ENCODE measurements at regions of chr11 and their contacts with region 1.

Region 1: DNA sequence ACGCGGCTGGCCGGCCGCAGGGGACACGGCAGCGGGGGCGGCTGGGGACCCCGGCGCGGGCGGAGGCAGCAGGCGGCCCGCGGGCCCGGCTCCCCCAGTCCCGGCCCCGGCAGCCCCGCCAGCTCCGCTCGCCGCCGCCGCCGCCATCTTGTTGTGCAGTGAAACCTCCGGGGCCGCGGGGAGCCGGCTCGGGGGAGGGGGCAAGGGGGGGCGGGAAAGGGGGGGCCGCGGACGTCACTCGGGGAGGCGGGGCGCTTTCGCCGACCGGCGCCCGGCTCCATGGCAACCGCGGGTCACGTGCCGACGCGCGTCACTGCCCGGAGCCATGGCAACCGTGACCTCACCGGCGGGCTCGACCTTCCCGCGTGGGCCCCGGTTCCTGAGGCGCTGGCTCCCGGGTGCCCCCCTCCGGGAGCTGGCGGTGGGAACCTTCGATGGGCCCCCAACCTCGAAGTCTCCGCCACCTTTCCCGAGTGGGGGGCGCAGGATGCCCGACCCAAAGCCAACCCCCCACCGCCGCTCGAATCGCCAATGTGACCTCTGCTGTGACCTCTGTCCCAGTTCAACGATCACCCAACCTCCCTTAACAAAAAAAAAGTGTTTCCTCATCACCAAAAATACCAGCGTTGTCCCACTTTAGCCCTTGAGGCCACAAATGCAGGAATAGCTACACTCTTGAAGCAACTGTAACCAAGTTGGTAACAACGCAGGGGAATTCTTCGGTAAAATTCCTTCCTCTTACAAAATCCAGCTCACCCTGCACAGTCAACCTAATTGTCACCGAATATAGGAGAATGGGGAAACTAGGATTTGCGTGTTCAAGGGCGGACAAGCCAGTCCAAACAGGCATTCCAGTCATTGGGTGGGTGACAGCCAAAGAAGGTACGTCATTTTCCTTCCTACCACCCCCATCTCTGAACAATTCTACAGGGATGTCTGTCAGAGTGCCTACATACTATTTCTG is at the start of gene SIK3:
- DNase-seq: peak; percentile 89
- H3K4me3 Mint-ChIP-seq: peak within 1 kb of the TSS; percentile 85
- H3K27ac Mint-ChIP-seq: peak within 1 kb of the TSS; percentile 100
- H3K4me1 Mint-ChIP-seq: peaks cover 44% of the 10 kb centered on the region
- H3K27me3 Mint-ChIP-seq: no peaks in the 10 kb centered on the region
- CTCF ChIP-seq: peak; percentile 44
- total RNA-seq, gene SIK3: 33.3 and 36.5 TPM in 2 replicates

Region 2: DNA sequence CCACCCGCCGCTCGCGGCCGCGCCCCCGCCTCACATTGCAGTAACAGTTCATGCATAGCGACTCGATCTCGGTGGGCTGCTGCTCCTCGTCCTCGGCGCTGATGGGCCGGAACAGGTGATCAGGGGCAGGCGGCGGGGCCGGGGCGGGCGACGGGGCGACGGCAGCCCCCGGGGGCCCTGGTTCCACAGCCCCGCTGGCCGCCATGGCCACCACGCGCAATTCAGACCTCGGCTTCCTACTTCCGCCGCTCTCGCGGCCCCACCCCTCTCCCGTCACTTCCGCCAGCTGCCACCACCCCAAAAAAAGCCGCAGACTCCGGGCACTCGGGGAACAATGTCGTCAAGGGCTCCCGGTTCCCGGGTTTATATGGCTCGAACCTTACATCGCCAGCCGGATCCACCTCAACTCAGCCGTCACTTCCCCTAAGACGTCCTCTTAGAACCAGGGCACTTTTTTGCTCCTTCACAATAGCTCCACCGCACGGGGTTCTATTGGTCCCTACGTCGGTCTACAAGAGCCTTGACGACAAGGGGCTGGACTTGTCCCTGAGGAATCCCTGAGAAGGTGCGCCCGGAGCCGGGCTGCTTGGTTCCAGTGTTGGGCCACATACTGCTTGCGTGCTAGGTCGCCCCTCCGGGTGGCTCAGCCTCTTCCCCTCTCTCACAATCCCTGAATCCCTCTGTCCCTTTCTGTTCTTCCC is 310.6 kb before region 1 on chr11 and contains the start of gene ZPR1:
- CTCF ChIA-PET with region 1: no interaction called
- POLR2A ChIA-PET with region 1: interaction called, 16 read pairs
- intact Hi-C with region 1: no loop called
- DNase-seq: peak; percentile 58
- H3K4me3 Mint-ChIP-seq: peak within 1 kb of the TSS; percentile 92
- H3K27ac Mint-ChIP-seq: peak within 1 kb of the TSS; percentile 99
- H3K4me1 Mint-ChIP-seq: peaks cover 28% of the 10 kb centered on the region
- H3K27me3 Mint-ChIP-seq: no peaks in the 10 kb centered on the region
- CTCF ChIP-seq: no peak
- total RNA-seq, gene ZPR1: 82.5 and 105 TPM in 2 replicates

Region 3: GRCh38 chr11:116960930-116961329 is 137.6 kb before region 1 on chr11:
- CTCF ChIA-PET with region 1: interaction called, 3 read pairs
- POLR2A ChIA-PET with region 1: interaction called, 18 read pairs
- intact Hi-C with region 1: no loop called
- DNase-seq: peak; percentile 63
- H3K4me3 Mint-ChIP-seq: no peak overlapping the region
- H3K27ac Mint-ChIP-seq: peak overlapping the region; percentile 44
- H3K4me1 Mint-ChIP-seq: peaks cover 20% of the 10 kb centered on the region
- H3K27me3 Mint-ChIP-seq: no peaks in the 10 kb centered on the region
- CTCF ChIP-seq: no peak

Region 4: GRCh38 chr11:117010808-117011540 is 87.6 kb before region 1 on chr11:
- CTCF ChIA-PET with region 1: interaction called, 5 read pairs
- POLR2A ChIA-PET with region 1: interaction called, 14 read pairs
- intact Hi-C with region 1: loop called (anchors 5 kb)
- DNase-seq: peak; percentile 90
- H3K4me3 Mint-ChIP-seq: peak overlapping the region; percentile 50
- H3K27ac Mint-ChIP-seq: peak overlapping the region; percentile 62
- H3K4me1 Mint-ChIP-seq: peaks cover 24% of the 10 kb centered on the region
- H3K27me3 Mint-ChIP-seq: no peaks in the 10 kb centered on the region
- CTCF ChIP-seq: no peak

Region 5: DNA sequence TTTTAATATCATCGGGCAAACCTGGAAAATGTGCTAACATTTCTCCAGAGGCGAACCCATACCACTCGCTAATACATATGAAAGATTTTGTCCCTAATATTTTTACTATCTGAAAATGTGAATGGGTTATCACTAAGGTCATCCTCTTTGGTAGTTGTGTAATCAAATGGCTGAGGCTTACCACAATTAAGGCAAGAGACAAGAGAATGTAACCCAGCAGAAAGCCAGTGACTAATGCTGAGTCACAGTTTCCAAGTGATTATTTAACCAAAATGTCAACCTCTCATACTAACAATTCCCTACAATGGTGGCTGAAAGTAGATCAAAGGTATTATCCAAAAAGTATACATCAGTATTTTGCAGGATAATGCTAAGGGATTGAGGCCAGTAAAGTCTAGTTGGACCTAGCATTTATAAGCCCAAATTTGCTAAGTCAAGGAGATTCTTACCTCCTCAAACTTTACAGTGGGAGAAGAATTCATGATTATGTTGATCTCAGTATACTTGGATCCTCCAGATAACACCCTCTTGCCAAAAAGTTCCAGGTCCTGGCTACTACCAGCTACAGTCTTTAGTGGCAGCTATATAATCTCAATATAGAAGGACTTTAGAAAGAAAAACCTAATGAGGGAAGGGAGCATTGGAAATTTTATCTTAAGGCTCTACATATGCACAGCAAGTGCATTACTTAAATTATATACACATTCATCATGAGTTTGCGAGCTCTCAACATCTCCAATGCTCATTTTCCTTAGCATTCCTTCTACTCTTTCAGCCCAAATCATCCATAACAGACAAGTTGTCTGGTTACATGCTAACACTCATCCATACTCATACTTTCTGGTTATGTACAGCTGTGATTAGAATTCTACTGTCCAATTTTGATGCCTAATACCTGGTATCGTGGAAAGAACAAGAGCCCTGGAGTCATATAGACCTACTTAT is 25.8 kb before region 1 on chr11:
- CTCF ChIA-PET with region 1: interaction called, 10 read pairs
- POLR2A ChIA-PET with region 1: interaction called, 87 read pairs
- intact Hi-C with region 1: no loop called
- DNase-seq: peak; percentile 92
- H3K4me3 Mint-ChIP-seq: no peak overlapping the region
- H3K27ac Mint-ChIP-seq: no peak overlapping the region
- H3K4me1 Mint-ChIP-seq: peaks cover 26% of the 10 kb centered on the region
- H3K27me3 Mint-ChIP-seq: no peaks in the 10 kb centered on the region
- CTCF ChIP-seq: no peak

Region 6: GRCh38 chr11:117170210-117170609 is 71.7 kb after region 1 on chr11:
- CTCF ChIA-PET with region 1: no interaction called
- POLR2A ChIA-PET with region 1: no interaction called
- intact Hi-C with region 1: no loop called
- DNase-seq: no peak
- H3K4me3 Mint-ChIP-seq: no peak overlapping the region
- H3K27ac Mint-ChIP-seq: no peak overlapping the region
- H3K4me1 Mint-ChIP-seq: peaks cover 13% of the 10 kb centered on the region
- H3K27me3 Mint-ChIP-seq: no peaks in the 10 kb centered on the region
- CTCF ChIP-seq: no peak

Measured in MCF 10A (cell line).